Mammary epithelial cell (primary cell): ENCODE measurements at regions of chr11 and their contacts with region 1.

Region 1: DNA sequence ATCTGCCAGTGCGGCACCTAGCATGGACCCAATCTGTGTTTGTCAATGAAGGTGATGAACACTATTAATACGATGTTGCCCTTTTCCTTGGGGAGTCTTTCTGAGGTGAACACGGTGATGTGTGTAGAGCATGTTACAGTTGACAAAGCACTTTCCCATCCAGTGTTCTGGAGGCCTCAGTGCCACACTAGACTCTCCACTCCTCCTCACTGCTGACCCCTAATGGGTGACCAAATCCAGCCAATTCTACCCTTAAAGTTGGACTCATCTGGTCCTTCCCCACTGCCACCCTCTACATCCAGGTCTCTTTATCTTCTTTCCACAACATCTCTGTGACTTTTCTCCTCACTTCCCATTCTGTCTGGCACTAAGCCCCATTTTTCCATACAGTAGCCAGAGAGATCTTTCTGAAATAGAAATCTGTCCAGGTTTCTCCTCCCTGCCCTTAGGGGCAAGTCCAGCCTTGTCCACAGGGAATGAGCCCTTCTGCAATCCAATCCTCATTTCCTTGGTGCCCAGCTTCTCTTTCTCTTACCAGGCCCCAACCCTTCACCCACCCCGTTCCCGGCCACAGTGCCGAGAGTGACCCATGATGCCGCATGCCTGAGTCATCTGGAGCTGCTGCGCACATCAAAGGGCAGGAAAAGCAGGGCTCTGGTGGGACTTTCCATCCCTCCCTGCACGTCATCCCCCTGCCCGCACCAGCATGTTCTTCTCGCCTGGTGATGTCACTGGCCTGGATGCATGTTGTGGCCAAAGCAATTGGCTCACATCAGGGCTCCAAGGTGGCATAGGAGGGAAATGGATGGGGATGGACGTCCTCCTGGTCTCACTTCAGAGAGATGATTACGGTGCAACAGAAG is 64.2 kb downstream of the RASSF10 start:
- DNase-seq: peak; percentile 100
- H3K4me3 ChIP-seq: no peak overlapping the region
- H3K27ac ChIP-seq: peak overlapping the region; percentile 88
- H3K4me1 ChIP-seq: peaks cover 40% of the 10 kb centered on the region
- H3K27me3 ChIP-seq: no peaks in the 10 kb centered on the region
- CTCF ChIP-seq: no peak

Region 2: DNA sequence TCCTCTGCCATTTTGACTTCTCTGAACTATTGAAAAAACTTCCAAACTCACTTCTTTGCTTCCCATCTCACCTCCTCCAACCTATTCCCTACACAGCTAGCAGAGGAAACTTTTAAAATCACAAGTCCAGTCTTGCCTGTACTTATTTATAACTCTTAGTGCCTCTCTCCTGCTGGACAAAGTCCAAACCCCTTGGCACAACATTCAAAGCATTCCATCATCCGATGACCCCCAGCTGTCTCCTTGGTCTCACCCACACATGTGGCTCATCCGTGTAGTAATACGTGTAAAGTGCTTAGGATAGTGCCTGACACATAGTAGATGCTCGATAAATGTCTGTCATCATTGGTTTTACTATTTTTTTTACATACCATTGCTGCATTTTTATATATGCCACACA is 594.6 kb before region 1 on chr11:
- CTCF ChIA-PET with region 1: no interaction called
- dilution Hi-C with region 1: no loop called
- in situ Hi-C with region 1: no loop called
- intact Hi-C with region 1: no loop called
- DNase-seq: peak; percentile 92
- H3K4me3 ChIP-seq: no peak overlapping the region
- H3K27ac ChIP-seq: no peak overlapping the region
- H3K4me1 ChIP-seq: peaks cover 18% of the 10 kb centered on the region
- H3K27me3 ChIP-seq: no peaks in the 10 kb centered on the region
- CTCF ChIP-seq: no peak

Region 3: DNA sequence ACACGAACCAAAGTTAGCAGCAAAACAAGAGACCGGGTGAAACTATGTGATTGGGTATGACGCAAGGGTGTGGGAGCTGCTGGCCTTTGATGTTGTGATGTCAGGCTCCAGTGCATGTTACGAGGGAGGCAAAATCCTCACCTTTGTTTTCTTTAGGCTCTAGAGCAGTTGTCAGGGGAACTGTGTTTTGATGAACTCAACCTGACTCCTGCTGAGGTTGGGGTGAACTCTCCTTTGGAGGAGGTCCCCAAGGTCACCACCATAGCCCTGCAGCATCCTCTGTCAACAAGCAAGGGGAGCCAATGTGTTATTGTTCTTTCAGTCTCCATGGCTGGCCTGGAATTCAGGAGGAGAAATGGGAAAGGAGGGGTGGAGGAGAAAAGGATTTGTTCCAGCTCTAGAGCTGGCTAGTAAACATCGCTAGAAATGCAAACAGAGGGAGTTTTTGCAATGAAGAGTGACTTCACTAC is 30.4 kb before region 1 on chr11:
- CTCF ChIA-PET with region 1: no interaction called
- dilution Hi-C with region 1: no loop called
- in situ Hi-C with region 1: no loop called
- intact Hi-C with region 1: loop called (anchors 2 kb)
- DNase-seq: no peak
- H3K4me3 ChIP-seq: no peak overlapping the region
- H3K27ac ChIP-seq: no peak overlapping the region
- H3K4me1 ChIP-seq: peaks cover 9% of the 10 kb centered on the region
- H3K27me3 ChIP-seq: no peaks in the 10 kb centered on the region
- CTCF ChIP-seq: no peak

Region 4: GRCh38 chr11:13105237-13105844 is 32.0 kb after region 1 on chr11:
- CTCF ChIA-PET with region 1: no interaction called
- dilution Hi-C with region 1: no loop called
- in situ Hi-C with region 1: no loop called
- intact Hi-C with region 1: no loop called
- DNase-seq: no peak
- H3K4me3 ChIP-seq: no peak overlapping the region
- H3K27ac ChIP-seq: no peak overlapping the region
- H3K4me1 ChIP-seq: peaks cover 24% of the 10 kb centered on the region
- H3K27me3 ChIP-seq: no peaks in the 10 kb centered on the region
- CTCF ChIP-seq: no peak

Region 5: GRCh38 chr11:13118194-13118593 is 44.8 kb after region 1 on chr11:
- CTCF ChIA-PET with region 1: no interaction called
- dilution Hi-C with region 1: no loop called
- in situ Hi-C with region 1: no loop called
- intact Hi-C with region 1: loop called (anchors 2 kb)
- DNase-seq: peak; percentile 99
- H3K4me3 ChIP-seq: no peak overlapping the region
- H3K27ac ChIP-seq: peak overlapping the region; percentile 92
- H3K4me1 ChIP-seq: peaks cover 48% of the 10 kb centered on the region
- H3K27me3 ChIP-seq: no peaks in the 10 kb centered on the region
- CTCF ChIP-seq: no peak